Mammary epithelial cell (primary cell): ENCODE measurements at regions of chr13 and their contacts with region 1.

Region 1: GRCh38 chr13:91894316-91894715 is 495.9 kb downstream of the GPC5 start:
- DNase-seq: no peak
- H3K4me3 ChIP-seq: no peak overlapping the region
- H3K27ac ChIP-seq: no peak overlapping the region
- H3K4me1 ChIP-seq: no peaks in the 10 kb centered on the region
- H3K27me3 ChIP-seq: no peaks in the 10 kb centered on the region
- CTCF ChIP-seq: no peak

Region 2: DNA sequence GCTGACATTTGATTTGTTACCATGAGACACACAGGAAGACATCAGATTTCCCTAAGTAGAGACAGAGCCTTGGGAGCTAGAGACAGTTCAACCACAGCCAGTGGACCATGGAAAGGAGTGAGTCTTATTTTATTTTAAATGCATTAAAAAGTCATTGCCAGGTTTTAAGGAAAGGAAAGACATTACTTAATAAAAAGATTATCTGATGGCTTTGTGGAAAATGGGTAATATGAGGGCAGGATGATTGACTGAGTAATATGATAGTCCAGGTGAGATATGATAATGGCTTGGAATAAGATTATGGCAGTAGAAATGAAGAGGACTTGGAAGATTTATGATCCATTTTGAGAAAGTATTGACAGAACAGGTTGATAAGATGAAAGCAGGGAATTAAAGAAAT is 84.3 kb after region 1 on chr13:
- CTCF ChIA-PET with region 1: no interaction called
- dilution Hi-C with region 1: no loop called
- in situ Hi-C with region 1: no loop called
- intact Hi-C with region 1: no loop called
- DNase-seq: no peak
- H3K4me3 ChIP-seq: no peak overlapping the region
- H3K27ac ChIP-seq: no peak overlapping the region
- H3K4me1 ChIP-seq: no peaks in the 10 kb centered on the region
- H3K27me3 ChIP-seq: no peaks in the 10 kb centered on the region
- CTCF ChIP-seq: no peak

Region 3: GRCh38 chr13:93318534-93319254 is 1424.4 kb after region 1 on chr13:
- CTCF ChIA-PET with region 1: interaction called, 13 read pairs
- dilution Hi-C with region 1: no loop called
- in situ Hi-C with region 1: no loop called
- intact Hi-C with region 1: no loop called
- DNase-seq: no peak
- H3K4me3 ChIP-seq: no peak overlapping the region
- H3K27ac ChIP-seq: no peak overlapping the region
- H3K4me1 ChIP-seq: no peaks in the 10 kb centered on the region
- H3K27me3 ChIP-seq: no peaks in the 10 kb centered on the region
- CTCF ChIP-seq: no peak